ENCODE measurements at regions of chr11 and their contacts with region 1.

Region 1: DNA sequence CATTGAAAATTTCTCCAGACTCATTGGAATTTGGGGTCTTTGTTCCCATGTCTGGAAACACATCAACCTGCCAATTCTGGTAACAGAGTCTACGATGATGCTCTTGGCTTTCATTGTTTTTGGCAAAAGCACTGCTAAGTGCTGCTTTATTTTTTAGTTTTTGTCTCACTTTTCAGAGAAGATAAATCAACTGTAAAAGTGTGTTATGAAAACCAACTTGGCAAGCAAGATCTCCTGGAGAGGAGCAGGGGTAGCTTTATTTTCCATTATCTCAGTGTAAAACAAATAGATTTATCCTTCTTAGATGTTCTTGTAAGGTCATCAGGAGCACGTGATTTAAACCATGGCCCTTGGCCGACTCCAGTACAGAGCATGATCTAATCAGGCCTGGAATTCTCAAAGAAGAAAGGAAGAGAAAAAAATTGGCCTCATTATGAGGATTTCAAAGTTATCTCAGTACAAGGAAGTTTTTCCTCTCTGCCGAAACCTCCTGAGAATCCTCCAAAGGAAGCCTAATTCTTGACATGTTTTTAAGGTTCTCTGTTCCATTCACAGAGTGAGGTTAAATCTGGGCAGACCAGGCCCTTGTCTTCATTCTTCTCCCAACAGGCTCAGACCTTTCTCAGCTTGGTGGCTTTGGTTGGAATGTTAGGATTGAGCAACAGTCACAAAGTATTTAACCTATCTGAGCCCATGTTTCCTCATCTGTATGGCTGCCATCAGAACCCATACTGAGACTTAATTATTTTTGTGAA is 16.4 kb upstream of the PAMR1 start:
- DNase-seq: peak; percentile 40 to 52
- H3K4me3 ChIP-seq: no peak overlapping the region
- H3K27ac ChIP-seq: peak overlapping the region; percentile 22; the same call in 1 of the 2 replicates
- H3K4me1 ChIP-seq: peaks cover 9% of the 10 kb centered on the region; the same call in 1 of the 2 replicates
- H3K27me3 ChIP-seq: no peaks in the 10 kb centered on the region
- CTCF ChIP-seq: no peak

Region 2: DNA sequence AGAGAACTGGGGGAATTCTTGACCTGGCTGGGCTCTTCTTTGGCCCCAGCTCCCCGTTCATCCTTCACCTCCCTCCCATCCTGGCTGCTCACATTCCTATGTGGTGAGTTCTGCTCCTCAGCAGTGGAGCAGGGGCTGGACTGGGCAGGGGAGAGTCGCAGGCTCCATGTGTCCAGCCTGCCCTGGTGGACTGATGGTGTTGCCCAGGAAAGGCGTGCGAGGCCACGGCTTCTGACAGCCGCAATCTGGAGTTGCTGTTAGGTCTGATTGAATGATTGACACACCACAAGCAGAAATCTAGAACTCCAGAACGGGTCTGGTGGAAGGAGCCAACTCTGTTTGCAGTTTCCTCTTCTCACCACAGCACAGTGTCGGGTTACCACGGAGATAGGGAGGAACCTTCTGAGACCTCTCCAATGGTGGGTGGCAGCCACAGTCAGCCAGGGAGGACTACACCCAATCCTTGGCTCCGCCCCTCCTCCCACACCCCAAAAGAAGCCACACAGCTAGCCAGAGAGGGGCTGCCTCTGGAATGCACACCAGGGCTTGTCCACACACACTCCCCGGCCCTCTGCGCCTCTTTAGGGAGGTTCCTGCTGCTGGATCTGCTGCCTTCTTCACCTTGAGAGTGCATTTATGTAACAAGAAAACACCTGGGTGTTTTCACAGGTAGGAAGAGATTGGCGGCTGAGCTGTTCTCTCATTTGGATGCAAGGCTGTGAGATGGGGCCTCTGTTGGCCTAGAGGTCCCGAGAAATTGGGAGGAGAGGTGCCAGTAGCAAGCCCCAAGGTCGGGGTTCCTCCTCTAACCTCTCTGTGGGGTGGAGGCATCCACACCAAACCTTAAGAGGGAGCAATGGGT is 459.2 kb before region 1 on chr11:
- CTCF ChIA-PET with region 1: no interaction called
- POLR2A ChIA-PET with region 1: no interaction called
- intact Hi-C with region 1: no loop called
- DNase-seq: peak; percentile 94 to 95
- H3K4me3 ChIP-seq: peak overlapping the region; percentile 39; the same call in 1 of the 2 replicates
- H3K27ac ChIP-seq: peak overlapping the region; percentile 85
- H3K4me1 ChIP-seq: peaks cover 69% of the 10 kb centered on the region
- H3K27me3 ChIP-seq: no peaks in the 10 kb centered on the region
- CTCF ChIP-seq: no peak

Region 3: DNA sequence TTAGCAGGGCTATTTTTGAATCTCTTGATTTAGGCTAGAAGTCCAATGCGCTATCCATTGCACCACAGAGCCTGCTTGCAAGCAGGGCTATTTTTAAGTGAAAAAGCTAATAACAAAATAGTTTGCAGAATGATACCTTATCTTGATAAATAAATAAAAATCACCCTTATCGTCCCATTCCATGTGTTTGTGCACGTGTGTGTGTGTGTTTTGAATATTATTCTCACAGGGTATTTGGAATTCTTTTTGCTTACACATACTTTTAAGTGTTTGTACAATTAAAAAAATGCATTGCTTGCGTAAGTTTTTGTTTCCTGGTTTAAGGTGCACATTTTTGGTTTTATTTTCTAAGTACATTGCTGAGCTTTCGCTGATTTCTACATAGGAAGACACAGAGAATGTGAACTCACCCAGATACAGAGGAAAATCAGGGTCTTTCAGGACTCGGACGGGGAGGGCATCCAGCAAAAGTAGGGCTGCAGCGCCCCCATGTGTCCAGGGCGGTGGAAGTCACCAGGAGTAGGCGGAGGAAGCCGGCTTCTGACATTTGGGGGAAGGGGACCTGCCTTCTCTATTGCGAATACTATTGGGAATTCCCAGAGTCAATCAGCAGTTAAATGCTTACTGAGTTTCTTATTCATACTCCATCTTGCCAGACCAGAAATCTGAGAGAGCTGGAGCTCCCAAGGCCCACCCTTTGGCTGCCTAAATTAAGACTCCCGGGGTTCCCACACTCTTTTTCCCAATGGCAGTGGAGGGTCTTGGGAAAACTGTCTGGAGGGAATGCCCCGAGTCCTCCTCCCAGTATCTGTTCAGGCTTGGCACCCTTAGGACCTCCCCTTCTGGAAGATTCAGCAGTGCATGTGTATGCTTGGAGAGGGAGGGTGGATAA is 149.6 kb before region 1 on chr11:
- CTCF ChIA-PET with region 1: no interaction called
- POLR2A ChIA-PET with region 1: no interaction called
- intact Hi-C with region 1: no loop called
- DNase-seq: peak; percentile 86 to 90
- H3K4me3 ChIP-seq: peak overlapping the region; percentile 16; the same call in 1 of the 2 replicates
- H3K27ac ChIP-seq: peak overlapping the region; percentile 72
- H3K4me1 ChIP-seq: peaks cover 49% of the 10 kb centered on the region
- H3K27me3 ChIP-seq: no peaks in the 10 kb centered on the region
- CTCF ChIP-seq: peak; percentile 99

Region 4: DNA sequence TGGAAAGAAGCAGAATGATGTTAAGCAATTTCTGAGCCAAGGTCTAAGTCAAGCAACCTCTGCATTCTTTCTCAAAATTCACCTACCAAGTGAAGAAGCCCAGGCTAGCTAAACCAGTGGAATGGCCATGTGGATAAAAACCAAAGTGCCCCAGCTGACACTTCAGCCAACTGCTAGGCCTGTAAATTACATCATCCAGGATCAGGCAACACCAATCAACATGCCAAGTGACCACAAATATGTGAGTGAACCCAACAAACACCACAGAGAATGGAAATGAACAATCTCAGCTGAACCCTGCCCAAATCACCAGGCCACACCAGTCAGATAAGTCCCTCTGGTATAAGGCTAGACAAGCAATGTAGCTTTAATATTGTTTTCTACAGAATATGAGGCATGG is 51.3 kb after region 1 on chr11:
- CTCF ChIA-PET with region 1: no interaction called
- POLR2A ChIA-PET with region 1: no interaction called
- intact Hi-C with region 1: loop called (anchors 2 kb)
- DNase-seq: peak; percentile 75 to 90
- H3K4me3 ChIP-seq: no peak overlapping the region
- H3K27ac ChIP-seq: peak overlapping the region; percentile 5
- H3K4me1 ChIP-seq: peaks cover 18% of the 10 kb centered on the region
- H3K27me3 ChIP-seq: no peaks in the 10 kb centered on the region
- CTCF ChIP-seq: no peak

Measured in PC-9 (cell line).